ENCODE measurements at regions of chr1 and their contacts with region 1.

Region 1: GRCh38 chr1:84668185-84668584 is 22.1 kb downstream of the SSX2IP start:
- DNase-seq: peak; percentile 17 to 40
- H3K4me3 ChIP-seq: no peak overlapping the region
- H3K4me1 ChIP-seq: no peaks in the 10 kb centered on the region
- H3K27me3 ChIP-seq: no peaks in the 10 kb centered on the region

Region 2: GRCh38 chr1:84406346-84406861 is 261.8 kb before region 1 on chr1:
- in situ Hi-C with region 1: no loop called
- DNase-seq: no peak
- H3K4me3 ChIP-seq: no peak overlapping the region
- H3K4me1 ChIP-seq: no peaks in the 10 kb centered on the region
- H3K27me3 ChIP-seq: no peaks in the 10 kb centered on the region

Region 3: GRCh38 chr1:84742653-84743052 is 74.5 kb after region 1 on chr1:
- in situ Hi-C with region 1: loop called (anchors 10 kb)
- DNase-seq: no peak
- H3K4me3 ChIP-seq: no peak overlapping the region
- H3K4me1 ChIP-seq: no peaks in the 10 kb centered on the region
- H3K27me3 ChIP-seq: no peaks in the 10 kb centered on the region

Measured in HAP-1 (cell line).